ENCODE measurements at regions of chr6 and their contacts with region 1.

Region 1: GRCh38 chr6:30935018-30935417 is 3.0 kb upstream of the SFTA2 start:
- DNase-seq: no peak
- ATAC-seq: no peak
- H3K4me3 ChIP-seq: no peak overlapping the region
- H3K4me3 Mint-ChIP-seq: no peak overlapping the region
- H3K27ac ChIP-seq: no peak overlapping the region
- H3K27ac Mint-ChIP-seq: no peak overlapping the region
- H3K4me1 ChIP-seq: no peaks in the 10 kb centered on the region
- H3K4me1 Mint-ChIP-seq: no peaks in the 10 kb centered on the region
- H3K27me3 ChIP-seq: peaks cover 0 to 8% of the 10 kb centered on the region in 2 experiments
- H3K27me3 Mint-ChIP-seq: peaks cover 12% of the 10 kb centered on the region
- CTCF ChIP-seq: no peak

Region 2: DNA sequence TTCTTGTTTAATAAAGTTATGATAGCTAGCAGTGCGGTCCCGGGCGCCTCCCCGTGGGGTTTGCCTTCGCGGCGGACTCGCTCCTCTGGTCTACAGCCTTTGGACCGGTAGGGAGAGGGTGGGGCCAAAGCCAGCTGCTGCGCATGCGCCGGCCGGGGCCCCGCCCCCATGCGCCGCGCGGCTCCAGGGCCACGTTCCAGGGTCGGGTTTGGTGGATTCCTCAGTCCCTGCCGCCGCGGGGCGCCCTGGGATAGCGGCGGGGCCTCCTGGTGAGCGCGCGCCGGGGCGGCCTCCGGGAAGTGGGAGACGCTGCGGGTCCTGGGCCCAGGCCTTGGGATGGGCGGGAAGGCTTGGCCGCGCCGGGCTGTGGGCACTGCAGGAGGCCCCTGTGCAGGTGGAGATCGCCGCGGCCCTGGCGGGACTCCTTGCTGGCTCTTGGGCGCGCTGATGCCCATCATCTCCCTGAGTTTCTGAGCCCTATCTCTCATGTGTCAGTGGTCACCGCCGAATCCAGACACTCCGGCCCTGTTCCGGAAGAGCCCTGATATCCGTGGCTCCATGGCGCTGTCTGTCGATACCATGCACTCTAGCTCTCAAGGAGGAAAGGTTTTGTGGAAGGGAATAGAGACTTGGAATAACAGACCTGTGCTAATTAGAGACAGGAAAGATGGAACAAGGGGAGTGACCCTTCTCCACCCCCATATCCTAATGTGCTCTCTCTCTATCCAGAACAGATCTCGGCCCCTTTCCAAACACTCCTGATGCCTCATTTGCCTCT is 20.8 kb before region 1 on chr6 and contains the start of gene VARS2:
- CTCF ChIA-PET with region 1: no interaction called
- POLR2A ChIA-PET with region 1: no interaction called
- intact Hi-C with region 1: no loop called
- DNase-seq: peak; percentile 69 to 94 (median 80)
- ATAC-seq: peak; percentile 96
- H3K4me3 ChIP-seq: peak within 1 kb of the TSS; percentile 82
- H3K4me3 Mint-ChIP-seq: peak within 1 kb of the TSS; percentile 96
- H3K27ac ChIP-seq: peak within 1 kb of the TSS; percentile 45 to 53
- H3K27ac Mint-ChIP-seq: peak within 1 kb of the TSS; percentile 87
- H3K4me1 ChIP-seq: peaks cover 19% of the 10 kb centered on the region
- H3K4me1 Mint-ChIP-seq: peaks cover 21% of the 10 kb centered on the region
- H3K27me3 ChIP-seq: no peaks in the 10 kb centered on the region
- H3K27me3 Mint-ChIP-seq: no peaks in the 10 kb centered on the region
- CTCF ChIP-seq: no peak
- total RNA-seq, gene VARS2: 19.3 to 21.7 TPM

Region 3: DNA sequence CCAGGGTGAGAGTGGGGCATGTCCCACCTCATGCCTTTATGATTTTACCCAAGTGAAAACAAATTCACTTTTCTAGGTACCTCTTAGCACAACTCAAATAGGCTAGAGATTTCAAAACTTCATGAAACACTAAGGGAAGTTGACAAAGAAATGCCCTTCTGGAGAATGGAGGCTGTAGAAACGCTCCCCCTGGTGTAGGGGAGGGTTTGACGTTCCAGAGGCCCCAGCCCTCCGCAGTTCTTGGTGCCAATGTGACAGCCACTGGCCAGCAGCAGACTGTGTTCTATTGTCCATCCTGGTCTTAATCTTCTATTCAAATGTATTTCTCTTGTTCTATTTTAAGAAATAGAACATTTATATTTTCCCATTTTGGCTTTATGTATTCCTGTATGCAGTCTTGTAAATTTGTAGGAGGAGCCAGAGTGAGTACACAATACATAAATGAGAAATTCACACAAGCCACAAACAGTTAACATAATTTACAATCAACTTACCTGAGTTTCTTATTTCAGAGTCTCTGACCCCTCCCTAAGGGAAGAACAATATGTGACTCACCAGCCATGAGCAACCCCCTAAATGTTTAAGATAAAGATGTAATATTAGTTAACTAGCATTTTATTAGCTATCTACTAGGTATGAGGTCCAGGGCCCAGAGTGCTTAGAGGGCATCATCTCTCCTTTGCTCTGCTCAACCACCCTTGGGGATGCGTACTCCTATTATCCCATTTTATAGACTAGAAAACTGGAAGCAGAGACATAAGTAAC is 39.7 kb after region 1 on chr6:
- CTCF ChIA-PET with region 1: no interaction called
- POLR2A ChIA-PET with region 1: no interaction called
- intact Hi-C with region 1: loop called in 1 of 2 experiments (anchors 5 kb)
- DNase-seq: no peak
- ATAC-seq: no peak
- H3K4me3 ChIP-seq: no peak overlapping the region
- H3K4me3 Mint-ChIP-seq: no peak overlapping the region
- H3K27ac ChIP-seq: no peak overlapping the region
- H3K27ac Mint-ChIP-seq: no peak overlapping the region
- H3K4me1 ChIP-seq: no peaks in the 10 kb centered on the region
- H3K4me1 Mint-ChIP-seq: no peaks in the 10 kb centered on the region
- H3K27me3 ChIP-seq: peaks cover 1 to 4% of the 10 kb centered on the region in 2 experiments
- H3K27me3 Mint-ChIP-seq: peaks cover 29% of the 10 kb centered on the region
- CTCF ChIP-seq: no peak